CD8-positive, alpha-beta T cell (primary cell): ENCODE measurements at regions of chr19 and their contacts with region 1.

Region 1: GRCh38 chr19:3670796-3671679 is 29.2 kb downstream of the PIP5K1C start:
- DNase-seq: peak in 5 of 9 experiments; percentile 26 to 60 (median 54)
- ATAC-seq: peak; percentile 52
- H3K4me3 ChIP-seq: peak overlapping the region; percentile 6 to 29
- H3K4me3 Mint-ChIP-seq: peak overlapping the region; percentile 65
- H3K27ac ChIP-seq: peak overlapping the region in 1 of 2 experiments; percentile 43
- H3K27ac Mint-ChIP-seq: no peak overlapping the region
- H3K4me1 ChIP-seq: peaks cover 20% of the 10 kb centered on the region
- H3K4me1 Mint-ChIP-seq: peaks cover 25% of the 10 kb centered on the region
- H3K27me3 ChIP-seq: peaks cover 0 to 2% of the 10 kb centered on the region in 2 experiments
- H3K27me3 Mint-ChIP-seq: no peaks in the 10 kb centered on the region
- CTCF ChIP-seq: no peak

Region 2: DNA sequence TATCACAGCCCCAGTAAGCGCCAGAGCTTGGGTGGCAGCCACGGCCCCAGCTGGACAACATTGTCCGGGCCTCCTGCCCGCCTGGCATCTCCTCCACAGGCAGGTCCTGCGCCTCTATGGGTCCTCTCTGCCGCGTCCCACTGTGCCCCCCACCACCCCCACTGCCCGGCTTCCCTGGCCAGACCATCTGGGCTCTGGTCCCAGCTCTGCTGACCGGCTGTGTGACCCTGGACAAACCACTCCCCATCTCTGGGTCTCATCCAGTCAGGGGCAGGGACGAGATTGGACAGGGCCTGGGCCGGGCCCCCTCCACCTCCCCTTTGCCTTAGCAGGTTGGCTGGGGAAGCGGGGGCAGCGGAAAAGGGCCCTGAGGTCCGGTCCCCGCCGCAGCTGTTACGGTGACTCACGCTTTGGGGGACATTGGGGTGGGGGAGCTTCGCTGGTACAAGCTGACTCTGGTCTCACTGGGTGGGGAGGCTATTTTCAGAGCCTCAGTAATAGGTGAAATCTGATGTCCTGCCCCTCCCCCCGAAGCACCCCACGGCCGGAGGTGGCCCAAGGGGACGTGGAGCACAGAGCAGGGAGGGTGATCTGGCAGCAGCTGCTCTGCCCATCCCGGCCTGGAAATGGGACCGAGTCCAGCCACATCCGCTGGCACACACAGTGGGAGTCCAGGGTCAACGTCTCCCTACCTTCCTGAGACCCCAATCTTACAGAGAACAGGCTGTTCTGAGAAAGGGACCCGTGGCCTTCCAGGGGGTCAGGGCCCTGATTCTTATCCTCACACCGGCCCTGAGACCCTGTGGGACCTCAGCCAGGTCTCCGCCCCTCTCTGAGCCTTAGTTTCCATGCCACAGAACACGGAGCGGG is 295.6 kb before region 1 on chr19:
- CTCF ChIA-PET with region 1: no interaction called
- POLR2A ChIA-PET with region 1: no interaction called
- intact Hi-C with region 1: no loop called
- DNase-seq: no peak
- ATAC-seq: no peak
- H3K4me3 ChIP-seq: no peak overlapping the region
- H3K4me3 Mint-ChIP-seq: no peak overlapping the region
- H3K27ac ChIP-seq: no peak overlapping the region
- H3K27ac Mint-ChIP-seq: no peak overlapping the region
- H3K4me1 ChIP-seq: no peaks in the 10 kb centered on the region
- H3K4me1 Mint-ChIP-seq: peaks cover 11% of the 10 kb centered on the region
- H3K27me3 ChIP-seq: no peaks in the 10 kb centered on the region
- H3K27me3 Mint-ChIP-seq: no peaks in the 10 kb centered on the region
- CTCF ChIP-seq: no peak

Region 3: GRCh38 chr19:3710265-3710812 is 39.3 kb after region 1 on chr19:
- CTCF ChIA-PET with region 1: interaction called, 84 read pairs
- POLR2A ChIA-PET with region 1: no interaction called
- intact Hi-C with region 1: loop called (anchors 1 kb)
- DNase-seq: peak in 1 of 9 experiments; percentile 37
- ATAC-seq: no peak
- H3K4me3 ChIP-seq: no peak overlapping the region
- H3K4me3 Mint-ChIP-seq: no peak overlapping the region
- H3K27ac ChIP-seq: no peak overlapping the region
- H3K27ac Mint-ChIP-seq: no peak overlapping the region
- H3K4me1 ChIP-seq: no peaks in the 10 kb centered on the region
- H3K4me1 Mint-ChIP-seq: peaks cover 6% of the 10 kb centered on the region
- H3K27me3 ChIP-seq: peaks cover 0 to 4% of the 10 kb centered on the region in 2 experiments
- H3K27me3 Mint-ChIP-seq: peaks cover 5% of the 10 kb centered on the region
- CTCF ChIP-seq: no peak

Region 4: GRCh38 chr19:3743486-3743885 is 72.4 kb after region 1 on chr19:
- CTCF ChIA-PET with region 1: no interaction called
- POLR2A ChIA-PET with region 1: no interaction called
- intact Hi-C with region 1: no loop called
- DNase-seq: no peak
- ATAC-seq: no peak
- H3K4me3 ChIP-seq: no peak overlapping the region
- H3K4me3 Mint-ChIP-seq: no peak overlapping the region
- H3K27ac ChIP-seq: no peak overlapping the region
- H3K27ac Mint-ChIP-seq: no peak overlapping the region
- H3K4me1 ChIP-seq: peaks cover 14% of the 10 kb centered on the region
- H3K4me1 Mint-ChIP-seq: peaks cover 12% of the 10 kb centered on the region
- H3K27me3 ChIP-seq: no peaks in the 10 kb centered on the region
- H3K27me3 Mint-ChIP-seq: no peaks in the 10 kb centered on the region
- CTCF ChIP-seq: no peak